GM12878 (cell line): ENCODE measurements at regions of chrX and their contacts with region 1.

Region 1: GRCh38 chrX:16882702-16883486 is 12.7 kb upstream of the RBBP7 start:
- DNase-seq: peak; percentile 37
- ATAC-seq: peak; percentile 90
- H3K4me3 ChIP-seq: peak overlapping the region; percentile 40
- H3K27ac ChIP-seq: peak overlapping the region; percentile 46; the same call in 1 of the 2 replicates
- H3K4me1 ChIP-seq: no peaks in the 10 kb centered on the region
- H3K27me3 ChIP-seq: peaks cover 0 to 4% of the 10 kb centered on the region in 2 experiments; a peak in 1 of 4 replicates
- CTCF ChIP-seq: peak; percentile 70 to 75 (median 74)
- EP300 ChIP-seq: no peak
- POLR2A ChIP-seq: no peak
- RAD21 ChIP-seq: peak; percentile 77

Region 2: DNA sequence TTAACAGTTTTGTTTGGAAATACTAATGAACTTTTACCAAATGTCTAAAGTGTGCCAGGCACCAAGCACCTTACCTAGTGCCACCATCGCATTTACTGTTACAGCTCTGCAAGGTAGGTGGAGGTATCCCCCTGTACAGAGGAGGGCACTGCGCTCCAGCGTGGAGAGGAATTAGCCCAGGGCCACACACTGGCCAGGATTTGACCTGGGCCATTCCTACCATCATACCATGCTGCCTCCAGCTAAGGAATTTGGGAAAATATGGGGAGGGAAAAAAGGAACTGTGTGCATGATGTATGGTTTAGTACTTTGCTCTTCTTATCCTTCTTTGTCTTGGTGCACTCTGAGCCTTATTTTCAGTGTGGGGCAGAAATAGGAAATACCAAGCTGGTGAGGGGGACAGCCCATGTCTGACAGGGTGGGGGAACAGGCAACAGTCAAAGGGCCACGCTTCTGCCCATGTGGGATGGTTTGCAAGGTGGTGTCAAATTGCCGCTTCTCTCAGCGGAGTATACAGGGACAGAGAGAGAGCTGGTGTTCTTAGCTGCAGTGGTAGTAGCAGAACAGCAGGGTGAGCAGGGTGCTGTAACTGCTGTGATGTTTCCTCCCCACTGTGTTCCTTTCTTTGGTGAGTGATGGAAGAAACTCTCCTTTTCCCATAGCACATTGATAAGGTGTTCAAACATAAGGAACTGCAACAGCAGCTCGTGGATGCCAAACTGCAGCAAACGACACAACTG is 50.8 kb before region 1 on chrX:
- CTCF ChIA-PET with region 1: interaction called, 14 read pairs
- POLR2A ChIA-PET with region 1: no interaction called
- RAD21 ChIA-PET with region 1: no interaction called
- SMC1A ChIA-PET with region 1: interaction called, 27 read pairs
- in situ Hi-C with region 1: no loop called
- intact Hi-C with region 1: no loop called
- DNase-seq: no peak
- ATAC-seq: no peak
- H3K4me3 ChIP-seq: no peak overlapping the region
- H3K27ac ChIP-seq: no peak overlapping the region
- H3K4me1 ChIP-seq: no peaks in the 10 kb centered on the region
- H3K27me3 ChIP-seq: no peaks in the 10 kb centered on the region
- CTCF ChIP-seq: no peak
- EP300 ChIP-seq: no peak
- POLR2A ChIP-seq: 0 out of 2 replicates have a peak, but pooled peaks have one; percentile 11
- RAD21 ChIP-seq: no peak

Region 3: GRCh38 chrX:16870095-16870860 is 12.6 kb before region 1 on chrX and contains the start of gene RBBP7:
- CTCF ChIA-PET with region 1: interaction called, 46 read pairs
- POLR2A ChIA-PET with region 1: interaction called, 6 read pairs
- RAD21 ChIA-PET with region 1: interaction called, 16 read pairs
- SMC1A ChIA-PET with region 1: interaction called, 27 read pairs
- in situ Hi-C with region 1: no loop called
- intact Hi-C with region 1: no loop called
- DNase-seq: peak; percentile 57
- ATAC-seq: peak; percentile 89
- H3K4me3 ChIP-seq: peak within 1 kb of the TSS; percentile 93
- H3K27ac ChIP-seq: peak within 1 kb of the TSS; percentile 92
- H3K4me1 ChIP-seq: peaks cover 7% of the 10 kb centered on the region
- H3K27me3 ChIP-seq: peaks cover 0 to 6% of the 10 kb centered on the region in 2 experiments; a peak in 1 of 4 replicates
- CTCF ChIP-seq: no peak
- EP300 ChIP-seq: no peak
- POLR2A ChIP-seq: peak; percentile 84
- RAD21 ChIP-seq: no peak
- polyA plus RNA-seq, gene RBBP7: 95.3 to 155 TPM

Region 4: GRCh38 chrX:16993791-16994318 is 111.0 kb after region 1 on chrX:
- CTCF ChIA-PET with region 1: interaction called, 10 read pairs
- POLR2A ChIA-PET with region 1: no interaction called
- RAD21 ChIA-PET with region 1: no interaction called
- SMC1A ChIA-PET with region 1: interaction called, 6 read pairs
- in situ Hi-C with region 1: no loop called
- intact Hi-C with region 1: no loop called
- DNase-seq: no peak
- ATAC-seq: peak; percentile 48; the same call in 1 of the 3 replicates
- H3K4me3 ChIP-seq: no peak overlapping the region
- H3K27ac ChIP-seq: no peak overlapping the region
- H3K4me1 ChIP-seq: no peaks in the 10 kb centered on the region
- H3K27me3 ChIP-seq: peaks cover 0 to 4% of the 10 kb centered on the region in 2 experiments; a peak in 1 of 4 replicates
- CTCF ChIP-seq: peak; percentile 18 to 34 (median 27); a peak in 3 of 6 replicates
- EP300 ChIP-seq: no peak
- POLR2A ChIP-seq: no peak
- RAD21 ChIP-seq: no peak

Region 5: DNA sequence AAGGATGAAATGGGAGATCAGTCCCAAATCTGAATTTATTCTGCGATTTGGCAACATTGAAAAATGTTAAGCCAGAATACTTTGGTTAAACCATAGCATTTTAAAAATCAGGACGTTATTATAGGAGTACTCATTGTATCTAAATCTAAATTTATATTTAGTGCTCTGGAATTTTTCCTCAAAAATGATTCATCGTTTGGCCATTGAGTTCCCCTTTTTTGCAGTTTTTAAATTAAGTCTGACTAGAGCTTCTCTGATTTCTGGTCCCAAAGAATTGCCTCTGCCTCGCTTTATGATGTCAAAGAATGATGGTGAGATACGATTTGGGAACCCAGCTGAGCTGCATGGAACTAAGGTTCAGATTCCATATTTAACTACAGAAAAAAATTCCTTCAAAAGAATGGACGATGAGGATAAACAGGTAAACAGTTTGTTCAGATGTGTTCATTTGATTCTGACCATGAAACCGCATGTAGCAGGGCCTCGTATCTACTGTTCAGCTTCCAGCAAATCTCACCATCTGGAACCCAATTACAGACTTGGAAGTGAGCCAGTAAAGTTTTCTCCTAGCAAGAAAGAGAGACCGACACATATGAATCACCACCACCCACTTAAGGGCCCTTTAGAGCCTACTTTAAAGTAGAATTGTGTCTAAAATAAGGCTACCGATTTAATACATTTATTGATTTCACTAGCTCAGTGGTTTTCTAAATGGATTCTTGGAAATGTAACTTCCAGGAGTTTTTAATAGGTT is 139.1 kb after region 1 on chrX:
- CTCF ChIA-PET with region 1: interaction called, 8 read pairs
- POLR2A ChIA-PET with region 1: no interaction called
- RAD21 ChIA-PET with region 1: interaction called, 10 read pairs
- SMC1A ChIA-PET with region 1: interaction called, 7 read pairs
- in situ Hi-C with region 1: no loop called
- intact Hi-C with region 1: no loop called
- DNase-seq: no peak
- ATAC-seq: no peak
- H3K4me3 ChIP-seq: no peak overlapping the region
- H3K27ac ChIP-seq: no peak overlapping the region
- H3K4me1 ChIP-seq: no peaks in the 10 kb centered on the region; the same call in 1 of the 2 replicates
- H3K27me3 ChIP-seq: no peaks in the 10 kb centered on the region
- CTCF ChIP-seq: no peak
- EP300 ChIP-seq: no peak
- POLR2A ChIP-seq: no peak
- RAD21 ChIP-seq: no peak

Region 6: GRCh38 chrX:17046478-17047097 is 163.7 kb after region 1 on chrX:
- CTCF ChIA-PET with region 1: interaction called, 205 read pairs
- POLR2A ChIA-PET with region 1: interaction called, 14 read pairs
- RAD21 ChIA-PET with region 1: interaction called, 75 read pairs
- SMC1A ChIA-PET with region 1: interaction called, 109 read pairs
- in situ Hi-C with region 1: no loop called
- intact Hi-C with region 1: loop called (anchors 1 kb)
- DNase-seq: peak; percentile 21
- ATAC-seq: peak; percentile 97
- H3K4me3 ChIP-seq: no peak overlapping the region
- H3K27ac ChIP-seq: no peak overlapping the region
- H3K4me1 ChIP-seq: no peaks in the 10 kb centered on the region
- H3K27me3 ChIP-seq: no peaks in the 10 kb centered on the region; a peak in 1 of 4 replicates
- CTCF ChIP-seq: peak; percentile 83 to 85 (median 84)
- EP300 ChIP-seq: no peak
- POLR2A ChIP-seq: no peak
- RAD21 ChIP-seq: peak; percentile 88

Region 7: DNA sequence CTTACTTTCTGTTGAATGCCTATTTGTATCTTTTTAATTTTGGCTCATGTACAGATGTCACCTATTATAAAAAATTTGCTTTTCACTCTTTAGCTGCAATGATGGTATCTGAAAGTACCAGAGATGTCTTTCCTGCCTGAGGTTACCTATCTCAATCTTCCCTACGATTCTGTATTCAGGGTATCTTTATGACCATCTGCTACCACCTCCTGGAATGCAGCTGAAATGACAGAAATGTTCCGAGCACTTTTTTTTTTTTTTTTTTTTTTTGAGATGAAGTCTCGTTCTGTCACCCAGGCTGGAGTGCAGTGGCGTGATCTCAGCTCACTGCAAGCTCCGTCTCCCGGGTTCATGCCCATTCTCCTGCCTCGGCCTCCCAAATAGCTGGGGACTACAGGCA is 199.9 kb after region 1 on chrX:
- CTCF ChIA-PET with region 1: interaction called, 10 read pairs
- POLR2A ChIA-PET with region 1: no interaction called
- RAD21 ChIA-PET with region 1: interaction called, 3 read pairs
- SMC1A ChIA-PET with region 1: interaction called, 8 read pairs
- in situ Hi-C with region 1: no loop called
- intact Hi-C with region 1: no loop called
- DNase-seq: no peak
- ATAC-seq: peak; percentile 56
- H3K4me3 ChIP-seq: no peak overlapping the region
- H3K27ac ChIP-seq: no peak overlapping the region
- H3K4me1 ChIP-seq: no peaks in the 10 kb centered on the region
- H3K27me3 ChIP-seq: no peaks in the 10 kb centered on the region; a peak in 1 of 4 replicates
- CTCF ChIP-seq: peak in 1 of 3 experiments; percentile 14; a peak in 1 of 6 replicates
- EP300 ChIP-seq: no peak
- POLR2A ChIP-seq: no peak
- RAD21 ChIP-seq: peak; percentile 49